ENCODE measurements at regions of chr14 and their contacts with region 1.

Region 1: GRCh38 chr14:75879031-75879430 is 102.8 kb downstream of the TGFB3 start:
- DNase-seq: no peak
- H3K4me3 ChIP-seq: no peak overlapping the region
- H3K27ac ChIP-seq: no peak overlapping the region
- H3K4me1 ChIP-seq: no peaks in the 10 kb centered on the region
- H3K27me3 ChIP-seq: no peaks in the 10 kb centered on the region
- CTCF ChIP-seq: no peak
- EP300 ChIP-seq: no peak
- POLR2A ChIP-seq: no peak
- RAD21 ChIP-seq: no peak

Region 2: GRCh38 chr14:75864352-75864751 is 14.7 kb before region 1 on chr14:
- CTCF ChIA-PET with region 1: interaction called, 18 read pairs
- POLR2A ChIA-PET with region 1: interaction called, 3 read pairs
- DNase-seq: no peak
- H3K4me3 ChIP-seq: no peak overlapping the region
- H3K27ac ChIP-seq: no peak overlapping the region
- H3K4me1 ChIP-seq: peaks cover 2 to 18% (median 9%) of the 10 kb centered on the region in 4 experiments; a peak in 4 of 7 replicates
- H3K27me3 ChIP-seq: peaks cover 10 to 21% (median 19%) of the 10 kb centered on the region in 4 experiments; a peak in 6 of 7 replicates
- CTCF ChIP-seq: no peak
- EP300 ChIP-seq: no peak
- POLR2A ChIP-seq: no peak
- RAD21 ChIP-seq: no peak